ENCODE measurements at regions of chr18 and their contacts with region 1.

Region 1: GRCh38 chr18:70431203-70431624 is 142.4 kb downstream of the SOCS6 start:
- DNase-seq: peak; percentile 86
- H3K4me3 ChIP-seq: no peak overlapping the region
- H3K27ac ChIP-seq: peak overlapping the region; percentile 86
- H3K4me1 ChIP-seq: peaks cover 19% of the 10 kb centered on the region
- H3K27me3 ChIP-seq: no peaks in the 10 kb centered on the region

Region 2: DNA sequence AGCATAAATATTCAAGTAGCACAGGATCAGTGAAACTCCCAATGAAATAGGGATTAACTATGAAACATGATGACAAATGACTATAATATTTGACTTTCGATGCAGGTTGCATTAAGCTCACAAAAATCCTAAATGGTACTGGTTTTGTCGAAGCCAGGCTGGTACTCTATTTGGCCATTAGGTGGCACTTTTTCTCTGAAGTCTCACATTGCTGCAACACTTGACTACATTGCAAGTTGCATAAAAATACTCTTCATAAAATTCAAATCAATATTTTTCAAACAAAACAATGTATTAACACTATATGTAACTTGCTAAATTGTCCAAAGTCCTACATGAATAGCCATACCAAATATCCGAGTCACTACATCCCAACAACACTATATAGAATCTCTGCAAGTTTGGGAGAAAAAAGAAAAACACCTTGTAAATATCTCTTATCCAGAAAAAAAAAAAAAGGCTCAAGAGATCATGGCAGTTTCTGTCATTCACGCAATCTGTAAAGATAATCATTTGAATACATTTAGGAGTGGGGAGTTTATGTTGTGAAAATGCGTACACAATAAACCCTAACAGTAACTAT is 235.3 kb before region 1 on chr18:
- in situ Hi-C with region 1: loop called (anchors 5 kb)
- DNase-seq: peak; percentile 80
- H3K4me3 ChIP-seq: no peak overlapping the region
- H3K27ac ChIP-seq: no peak overlapping the region
- H3K4me1 ChIP-seq: peaks cover 3% of the 10 kb centered on the region; the same call in 1 of the 2 replicates
- H3K27me3 ChIP-seq: no peaks in the 10 kb centered on the region

Measured in GM23248 (cell line).